ACHN (cell line): ENCODE measurements at regions of chr12 and their contacts with region 1.

Region 1: GRCh38 chr12:12081836-12082497 is 11.2 kb downstream of the BCL2L14 start:
- DNase-seq: peak; percentile 76

Region 2: DNA sequence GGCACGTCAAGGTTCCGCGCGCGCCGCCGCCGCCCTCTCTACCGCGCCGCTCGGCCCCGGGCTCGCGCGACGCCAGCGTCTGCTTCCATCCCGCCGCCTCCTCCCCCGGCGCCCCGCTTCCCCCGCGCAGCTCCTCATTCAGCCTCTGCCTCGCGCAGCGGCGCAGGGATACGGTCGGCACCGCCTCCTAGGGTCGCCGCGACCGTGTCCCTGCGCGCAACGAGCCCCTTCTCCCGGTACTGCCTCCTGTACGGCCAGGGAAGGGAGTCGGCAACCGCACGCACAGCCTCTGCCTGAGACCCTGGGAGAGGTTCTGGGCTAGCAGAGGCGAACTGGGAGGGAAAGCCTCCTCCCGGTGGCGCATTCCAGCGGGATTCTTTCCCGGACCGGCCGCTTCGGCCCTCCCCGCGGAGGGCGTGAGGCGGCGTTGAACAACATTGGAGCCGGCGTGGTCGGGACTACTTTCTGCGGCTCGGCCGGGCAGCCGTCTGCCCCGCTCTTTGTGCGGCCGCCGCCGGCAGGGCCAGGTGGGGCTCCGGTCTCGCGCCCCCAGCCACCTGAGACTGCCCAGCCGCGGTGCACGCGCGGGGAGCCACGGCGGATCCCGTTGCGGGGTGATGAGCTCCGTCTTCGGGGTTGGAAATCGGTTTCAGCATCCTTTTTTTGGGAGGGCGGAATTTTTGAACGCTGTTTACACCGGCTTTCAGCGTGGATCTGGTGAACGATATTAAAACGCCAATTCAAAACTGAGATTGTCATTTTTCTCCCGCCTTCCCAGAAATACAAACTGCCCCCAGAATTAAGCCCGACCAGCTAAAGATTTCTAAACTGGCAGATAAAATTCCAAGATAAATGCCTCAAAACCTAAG is 185.1 kb after region 1 on chr12 and contains the start of gene LRP6:
- in situ Hi-C with region 1: no loop called
- DNase-seq: peak; percentile 97

Region 3: DNA sequence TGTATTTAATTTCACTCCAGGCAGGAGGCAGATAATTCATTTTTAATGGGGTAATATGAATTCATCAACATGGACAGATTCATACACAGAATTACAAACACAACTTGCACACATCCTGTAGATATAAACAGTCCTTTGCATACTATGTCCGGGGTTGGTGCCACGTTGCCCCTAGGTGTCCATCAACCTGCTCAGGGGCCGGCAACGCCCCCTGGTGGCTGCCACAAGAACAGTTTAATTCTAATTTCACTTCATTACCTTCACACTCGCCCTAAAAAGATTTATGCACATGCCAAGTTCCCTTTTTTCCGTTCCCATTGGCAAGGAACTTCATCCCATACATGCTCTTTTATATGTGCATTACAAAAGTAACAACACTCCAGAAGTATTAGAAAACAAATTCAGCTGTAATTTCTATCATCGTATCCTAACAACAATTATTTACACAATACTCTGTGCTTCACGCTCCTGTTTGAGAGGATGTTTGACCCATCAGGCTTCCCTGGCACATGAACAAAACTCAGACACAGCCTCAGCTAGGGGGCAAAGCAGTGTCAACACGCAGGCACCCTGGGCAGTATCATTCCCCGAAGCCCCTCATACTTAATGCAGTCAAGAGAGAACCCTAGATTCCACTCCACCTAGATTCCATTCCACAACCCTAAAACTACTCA is 252.5 kb after region 1 on chr12:
- in situ Hi-C with region 1: loop called (anchors 25 kb)
- DNase-seq: peak; percentile 68